ENCODE measurements at regions of chr12 and their contacts with region 1.

Region 1: GRCh38 chr12:32261638-32262037 is 137.7 kb upstream of the FGD4 start:
- DNase-seq: no peak
- H3K4me3 ChIP-seq: no peak overlapping the region
- H3K27ac ChIP-seq: no peak overlapping the region
- H3K4me1 ChIP-seq: no peaks in the 10 kb centered on the region; a peak in 1 of 7 replicates
- H3K27me3 ChIP-seq: no peaks in the 10 kb centered on the region
- CTCF ChIP-seq: peak; percentile 55 to 73 (median 69)
- EP300 ChIP-seq: no peak
- POLR2A ChIP-seq: no peak
- RAD21 ChIP-seq: peak; percentile 65 to 77

Region 2: DNA sequence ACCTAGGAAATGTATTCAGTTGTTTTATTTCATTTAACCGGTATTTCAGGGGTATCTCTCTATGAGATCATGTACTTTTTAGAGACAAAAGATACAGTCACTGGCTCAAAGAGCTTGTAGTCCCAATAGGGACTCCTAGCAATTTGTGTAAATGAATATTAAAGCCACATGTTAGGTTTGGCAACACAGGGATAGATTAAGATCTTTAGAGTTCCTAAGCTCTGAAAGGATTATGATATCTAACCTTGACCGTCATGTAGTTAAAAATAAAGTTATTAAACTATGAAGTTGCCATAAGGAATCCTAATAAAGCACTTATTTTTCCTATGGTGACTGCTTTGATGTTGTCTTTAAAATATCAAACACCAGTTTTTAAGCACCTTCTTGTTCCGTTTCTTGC is 37.3 kb after region 1 on chr12:
- CTCF ChIA-PET with region 1: interaction called, 13 read pairs
- POLR2A ChIA-PET with region 1: no interaction called
- DNase-seq: no peak
- H3K4me3 ChIP-seq: no peak overlapping the region
- H3K27ac ChIP-seq: no peak overlapping the region
- H3K4me1 ChIP-seq: no peaks in the 10 kb centered on the region
- H3K27me3 ChIP-seq: no peaks in the 10 kb centered on the region
- CTCF ChIP-seq: no peak
- EP300 ChIP-seq: no peak
- POLR2A ChIP-seq: no peak
- RAD21 ChIP-seq: no peak